Left cardiac atrium (tissue), 4 donors: ENCODE measurements at regions of chr14 and their contacts with region 1.

Region 1: GRCh38 chr14:92783816-92784431 is 10.2 kb upstream of the GOLGA5 start:
- DNase-seq: no peak
- ATAC-seq: peak; percentile 50 to 77

Region 2: DNA sequence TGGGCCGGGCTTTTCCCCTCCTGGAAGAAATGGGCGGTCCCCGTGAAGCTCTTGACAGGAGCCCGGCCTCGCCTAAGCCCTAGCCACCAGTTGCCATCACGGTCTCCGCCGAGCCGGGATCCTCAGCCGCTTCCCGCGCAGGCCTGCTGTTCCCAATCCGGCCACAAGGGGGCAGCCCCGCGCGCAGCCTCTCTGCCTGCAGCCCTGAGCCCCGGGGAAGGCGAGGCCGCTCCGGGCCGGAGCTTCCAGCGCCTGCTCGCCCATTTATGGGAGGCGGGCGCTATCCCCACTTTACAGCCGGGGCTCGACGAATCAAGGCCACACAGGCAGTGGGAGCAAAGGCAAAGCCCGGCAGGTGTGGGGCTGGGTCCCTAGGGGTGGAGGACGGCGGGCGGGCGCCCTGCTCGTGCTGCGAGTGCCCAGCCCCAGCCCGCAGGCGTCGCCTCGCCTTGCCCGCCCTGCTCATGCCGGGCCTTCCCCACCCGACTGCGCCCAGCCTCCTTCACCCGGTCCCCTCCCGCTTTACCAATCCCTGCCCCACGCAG is 97.0 kb before region 1 on chr14:
- intact Hi-C with region 1: no loop called
- DNase-seq: peak; percentile 82
- ATAC-seq: peak; percentile 83 to 84

Region 3: GRCh38 chr14:92712654-92713051 is 71.3 kb before region 1 on chr14:
- intact Hi-C with region 1: loop called (anchors 2 to 5 kb)
- DNase-seq: no peak
- ATAC-seq: no peak

Region 4: DNA sequence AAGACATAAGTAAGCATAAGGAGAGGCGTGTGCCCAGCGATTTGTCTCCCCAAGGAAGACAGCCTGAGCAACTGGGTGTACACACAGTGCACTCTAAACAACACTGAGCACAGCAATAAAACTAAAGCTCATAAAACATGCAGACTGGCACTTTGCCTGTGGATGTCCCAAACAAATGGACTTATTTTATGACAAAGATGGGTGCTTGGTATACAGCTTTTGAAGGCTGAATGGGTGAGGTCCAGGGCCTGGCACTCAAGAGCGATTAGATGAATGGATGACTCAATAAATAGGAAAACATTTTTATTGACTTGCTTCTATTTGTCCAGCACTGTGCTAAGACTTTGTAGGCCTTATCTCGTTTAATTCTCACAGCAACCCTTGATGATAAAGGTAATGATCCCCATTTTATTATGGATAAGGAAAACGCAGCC is 64.0 kb before region 1 on chr14:
- intact Hi-C with region 1: loop called in 1 of 2 experiments (anchors 2 kb)
- DNase-seq: no peak
- ATAC-seq: peak; percentile 16 to 33

Region 5: DNA sequence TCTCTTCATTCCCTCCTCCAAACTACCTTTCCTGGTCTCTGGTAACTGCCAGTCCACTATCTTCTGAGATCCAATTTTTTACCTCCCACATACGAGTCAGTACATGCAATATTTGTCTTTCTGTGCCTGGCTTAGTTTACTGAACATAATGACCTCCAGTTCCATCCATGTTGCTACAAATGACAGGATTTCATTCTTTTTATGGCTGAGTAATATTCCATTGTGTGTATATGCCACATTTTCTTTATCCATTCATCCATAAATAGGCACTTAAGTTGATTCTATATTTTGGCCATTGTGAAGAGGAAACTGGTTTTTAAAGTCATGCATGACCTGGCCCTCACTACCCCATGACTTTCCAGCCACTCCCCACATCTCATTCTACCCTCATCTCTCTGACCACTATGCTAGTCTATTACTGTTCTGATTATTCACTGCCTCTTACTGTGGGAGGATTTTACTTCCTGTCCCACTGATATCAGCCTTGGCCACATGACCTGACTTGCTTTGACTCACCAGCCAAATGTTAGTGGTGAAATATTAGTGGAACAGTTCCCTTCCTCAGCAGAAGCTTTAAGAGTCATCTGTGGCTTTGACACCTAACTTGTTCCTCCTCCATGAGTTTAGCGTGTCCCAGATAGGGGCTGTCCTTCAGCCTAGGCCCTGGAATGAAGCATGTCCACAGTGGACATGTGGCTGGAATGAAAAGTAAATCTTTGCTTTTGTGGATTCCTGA is 62.4 kb after region 1 on chr14:
- intact Hi-C with region 1: no loop called
- DNase-seq: no peak
- ATAC-seq: peak; percentile 71 to 90

Region 6: GRCh38 chr14:93132470-93133065 is 348.6 kb after region 1 on chr14:
- intact Hi-C with region 1: no loop called
- DNase-seq: no peak
- ATAC-seq: peak; percentile 42 to 84